Vagina (tissue), 2 donors: ENCODE measurements at regions of chr3 and their contacts with region 1.

Region 1: DNA sequence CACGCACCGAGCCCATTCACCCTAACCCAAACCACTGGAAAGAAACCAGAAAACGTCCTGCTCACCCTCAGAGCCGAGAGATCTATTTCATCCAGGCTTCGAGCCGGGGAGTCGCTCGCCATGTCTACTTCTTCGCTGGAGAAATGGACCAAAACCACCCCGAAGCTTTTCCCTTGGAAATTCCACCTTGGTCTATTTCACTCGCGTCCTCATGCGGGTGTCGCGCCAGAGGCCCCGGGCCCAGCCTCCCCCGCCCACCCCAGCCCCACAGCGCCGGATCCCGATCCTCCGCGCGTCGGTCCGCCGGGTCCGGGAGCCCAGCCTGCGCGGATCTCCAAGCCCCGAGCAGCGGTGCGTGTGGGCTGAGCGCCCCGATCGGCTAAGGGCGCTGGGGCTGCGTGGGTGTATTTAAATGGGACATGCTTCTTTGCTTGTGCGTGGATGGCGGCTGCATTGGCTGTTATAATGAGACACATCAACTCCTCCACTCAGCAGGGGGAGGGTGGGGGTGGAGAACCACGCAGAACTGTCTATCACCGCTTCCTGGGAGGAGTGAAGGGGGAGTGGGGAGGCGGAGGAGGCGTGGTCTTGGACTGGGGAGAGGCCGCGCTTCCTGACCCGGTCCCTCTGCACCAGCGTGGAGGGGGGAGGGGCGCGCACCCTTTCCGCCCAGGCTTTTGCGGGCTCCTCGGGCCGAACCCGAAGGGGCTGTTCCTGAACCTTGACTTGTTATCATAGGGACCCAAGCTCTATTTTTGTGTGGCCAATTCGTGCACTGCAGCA is at the start of gene TNIK:
- DNase-seq: peak in 1 of 2 donors; percentile 92
- H3K4me3 ChIP-seq: peak within 1 kb of the TSS; percentile 66 to 81
- H3K27ac ChIP-seq: peak within 1 kb of the TSS; percentile 66
- H3K4me1 ChIP-seq: peaks cover 30% of the 10 kb centered on the region
- H3K27me3 ChIP-seq: no peaks in the 10 kb centered on the region
- CTCF ChIP-seq: no peak
- POLR2A ChIP-seq: no peak
- total RNA-seq, gene TNIK: 5.9 TPM

Region 2: GRCh38 chr3:171187706-171188290 is 272.3 kb before region 1 on chr3:
- intact Hi-C with region 1: loop called (anchors 10 kb)
- DNase-seq: no peak
- H3K4me3 ChIP-seq: no peak overlapping the region
- H3K27ac ChIP-seq: no peak overlapping the region
- H3K4me1 ChIP-seq: peaks cover 6% of the 10 kb centered on the region
- H3K27me3 ChIP-seq: no peaks in the 10 kb centered on the region
- CTCF ChIP-seq: peak in 2 of 3 experiments; percentile 37 to 45
- POLR2A ChIP-seq: no peak